H1 (cell line): ENCODE measurements at regions of chr4 and their contacts with region 1.

Region 1: DNA sequence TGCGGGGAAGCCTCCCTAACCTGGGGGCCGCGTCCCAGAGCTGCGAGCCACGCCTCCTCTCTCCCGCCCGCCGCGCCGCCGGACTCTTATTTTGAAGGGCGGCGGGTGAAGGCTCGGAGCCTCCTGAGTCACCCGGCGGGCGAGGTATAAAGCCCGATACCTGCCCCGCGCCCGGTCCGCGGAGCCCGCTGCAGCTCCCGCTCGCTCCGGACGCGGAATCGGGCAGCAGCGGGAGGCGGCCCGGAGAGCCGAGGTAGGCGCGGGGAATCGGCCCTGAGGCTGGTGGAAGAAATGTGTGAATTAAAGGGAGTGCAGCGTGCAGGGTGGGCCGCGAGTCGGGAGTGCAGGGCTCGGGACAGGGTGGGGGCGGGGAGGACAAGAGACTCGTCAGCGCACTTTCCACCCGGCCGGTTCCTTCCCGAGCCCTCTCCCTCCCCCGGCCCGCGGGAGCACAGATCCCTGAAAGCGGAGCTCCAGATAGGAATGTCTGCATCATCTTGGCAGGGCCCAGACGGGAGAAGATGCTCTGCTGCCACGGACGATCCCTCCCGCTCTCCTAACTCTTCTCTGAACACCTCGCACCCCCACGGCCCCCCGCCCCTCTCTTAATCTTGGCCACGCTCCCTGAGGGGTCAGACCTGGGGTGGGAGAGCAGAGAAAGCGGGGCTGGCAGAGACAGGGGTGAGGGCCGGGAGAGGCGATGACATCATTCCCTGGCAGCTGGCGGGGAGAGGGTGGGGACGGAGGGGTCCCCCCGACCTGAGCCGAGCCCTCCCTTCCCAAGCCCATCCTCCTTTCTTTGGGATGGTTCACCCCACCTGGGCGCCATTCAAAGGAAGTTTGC is 177.9 kb downstream of the CBR4 start:
- DNase-seq: peak; percentile 51 to 84
- H3K4me3 ChIP-seq: peak overlapping the region; percentile 69 to 96 (median 81)
- H3K27ac ChIP-seq: peak overlapping the region; percentile 88
- H3K4me1 ChIP-seq: peaks cover 0 to 20% (median under 1%) of the 10 kb centered on the region in 4 experiments; a peak in 5 of 7 replicates
- H3K27me3 ChIP-seq: peaks cover 0 to 11% (median 5%) of the 10 kb centered on the region in 4 experiments; a peak in 3 of 7 replicates
- CTCF ChIP-seq: no peak
- EP300 ChIP-seq: 0 out of 3 replicates have a peak, but pooled peaks of 1 of the 2 experiments have one; percentile 10
- POLR2A ChIP-seq: peak; percentile 75 to 80
- RAD21 ChIP-seq: 0 out of 4 replicates have a peak, but pooled peaks of 1 of the 2 experiments have one; percentile 3

Region 2: GRCh38 chr4:168710353-168710946 is 121.7 kb before region 1 on chr4:
- CTCF ChIA-PET with region 1: interaction called, 22 read pairs
- POLR2A ChIA-PET with region 1: interaction called, 3 read pairs
- DNase-seq: no peak
- H3K4me3 ChIP-seq: no peak overlapping the region
- H3K27ac ChIP-seq: no peak overlapping the region
- H3K4me1 ChIP-seq: no peaks in the 10 kb centered on the region
- H3K27me3 ChIP-seq: peaks cover 0 to 3% (median 0%) of the 10 kb centered on the region in 4 experiments; a peak in 2 of 7 replicates
- CTCF ChIP-seq: peak in 2 of 3 experiments; percentile 54 to 66; a peak in 3 of 4 replicates
- EP300 ChIP-seq: no peak
- POLR2A ChIP-seq: no peak
- RAD21 ChIP-seq: peak; percentile 83 to 87

Region 3: GRCh38 chr4:168815379-168816345 is 16.5 kb before region 1 on chr4:
- CTCF ChIA-PET with region 1: interaction called, 38 read pairs
- POLR2A ChIA-PET with region 1: interaction called, 127 read pairs
- DNase-seq: no peak
- H3K4me3 ChIP-seq: no peak overlapping the region
- H3K27ac ChIP-seq: no peak overlapping the region
- H3K4me1 ChIP-seq: peaks cover 0 to 17% (median 12%) of the 10 kb centered on the region in 4 experiments; a peak in 4 of 7 replicates
- H3K27me3 ChIP-seq: no peaks in the 10 kb centered on the region
- CTCF ChIP-seq: no peak
- EP300 ChIP-seq: no peak
- POLR2A ChIP-seq: no peak
- RAD21 ChIP-seq: no peak

Region 4: GRCh38 chr4:168847771-168848511 is 15.8 kb after region 1 on chr4:
- CTCF ChIA-PET with region 1: interaction called, 26 read pairs
- POLR2A ChIA-PET with region 1: interaction called, 32 read pairs
- DNase-seq: no peak
- H3K4me3 ChIP-seq: no peak overlapping the region
- H3K27ac ChIP-seq: no peak overlapping the region
- H3K4me1 ChIP-seq: peaks cover 14 to 41% (median 20%) of the 10 kb centered on the region in 4 experiments
- H3K27me3 ChIP-seq: no peaks in the 10 kb centered on the region
- CTCF ChIP-seq: no peak
- EP300 ChIP-seq: no peak
- POLR2A ChIP-seq: no peak
- RAD21 ChIP-seq: no peak

Region 5: DNA sequence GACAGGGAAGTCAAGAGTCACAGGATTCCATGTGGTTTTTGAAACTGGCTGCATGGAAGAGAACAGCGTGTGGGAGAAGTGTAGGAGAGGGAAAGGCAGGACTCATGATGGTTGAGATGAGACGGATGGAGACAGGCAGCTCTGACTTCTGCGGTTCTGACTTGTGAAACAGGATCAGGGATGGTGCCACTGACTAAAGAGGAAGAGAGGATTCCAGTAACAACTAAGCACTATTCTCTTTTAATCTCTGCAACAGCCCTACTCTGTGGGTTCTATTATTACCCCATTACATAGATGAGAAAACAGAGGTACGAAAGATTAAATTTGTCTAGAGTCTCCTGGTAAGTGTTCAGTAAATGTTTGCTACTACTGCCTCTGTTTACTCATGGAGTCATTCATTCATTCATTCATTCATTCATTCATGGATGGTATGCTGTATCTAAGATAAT is 21.7 kb after region 1 on chr4:
- CTCF ChIA-PET with region 1: interaction called, 25 read pairs
- POLR2A ChIA-PET with region 1: interaction called, 14 read pairs
- DNase-seq: no peak
- H3K4me3 ChIP-seq: no peak overlapping the region
- H3K27ac ChIP-seq: no peak overlapping the region
- H3K4me1 ChIP-seq: peaks cover 3 to 11% (median 3%) of the 10 kb centered on the region in 4 experiments; a peak in 6 of 7 replicates
- H3K27me3 ChIP-seq: no peaks in the 10 kb centered on the region
- CTCF ChIP-seq: no peak
- EP300 ChIP-seq: no peak
- POLR2A ChIP-seq: no peak
- RAD21 ChIP-seq: no peak

Region 6: DNA sequence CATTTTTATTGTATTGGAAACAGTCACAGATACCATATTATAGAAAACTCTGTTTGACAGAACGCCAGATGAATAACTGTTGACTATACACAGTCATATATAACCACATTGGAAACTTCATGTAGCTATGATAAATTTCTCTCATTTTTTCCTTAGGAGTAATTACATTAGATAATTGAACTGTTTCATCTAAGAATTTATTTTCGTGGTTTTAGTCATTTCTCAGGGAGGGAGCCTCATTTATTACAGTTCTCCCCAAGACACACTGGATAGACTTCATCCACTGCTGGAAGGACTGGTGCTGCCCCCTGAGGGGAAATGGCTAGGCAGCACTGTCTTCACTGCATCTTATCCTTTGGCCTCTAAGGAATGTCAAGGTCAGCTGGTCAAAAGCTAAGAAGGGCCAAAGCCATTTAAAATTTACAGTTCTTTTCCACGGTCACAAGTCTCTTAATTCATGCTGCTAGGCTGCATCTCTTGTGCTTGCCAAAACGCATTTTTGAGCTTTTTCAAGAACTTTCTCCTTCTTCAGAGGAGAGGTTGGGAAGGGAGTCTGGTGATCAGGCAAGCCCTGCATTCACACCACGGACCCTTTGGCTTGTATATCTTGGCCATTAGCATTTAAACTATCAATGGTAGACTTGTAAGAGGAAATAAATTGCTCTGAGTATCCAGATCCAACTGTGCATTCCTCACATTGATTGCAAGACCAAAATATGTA is 32.8 kb after region 1 on chr4:
- CTCF ChIA-PET with region 1: interaction called, 30 read pairs
- POLR2A ChIA-PET with region 1: interaction called, 3 read pairs
- DNase-seq: no peak
- H3K4me3 ChIP-seq: no peak overlapping the region
- H3K27ac ChIP-seq: no peak overlapping the region
- H3K4me1 ChIP-seq: peaks cover 0 to 8% (median 4%) of the 10 kb centered on the region in 4 experiments; a peak in 2 of 7 replicates
- H3K27me3 ChIP-seq: no peaks in the 10 kb centered on the region
- CTCF ChIP-seq: peak; percentile 48 to 64 (median 63)
- EP300 ChIP-seq: no peak
- POLR2A ChIP-seq: no peak
- RAD21 ChIP-seq: peak; percentile 67 to 72

Region 7: DNA sequence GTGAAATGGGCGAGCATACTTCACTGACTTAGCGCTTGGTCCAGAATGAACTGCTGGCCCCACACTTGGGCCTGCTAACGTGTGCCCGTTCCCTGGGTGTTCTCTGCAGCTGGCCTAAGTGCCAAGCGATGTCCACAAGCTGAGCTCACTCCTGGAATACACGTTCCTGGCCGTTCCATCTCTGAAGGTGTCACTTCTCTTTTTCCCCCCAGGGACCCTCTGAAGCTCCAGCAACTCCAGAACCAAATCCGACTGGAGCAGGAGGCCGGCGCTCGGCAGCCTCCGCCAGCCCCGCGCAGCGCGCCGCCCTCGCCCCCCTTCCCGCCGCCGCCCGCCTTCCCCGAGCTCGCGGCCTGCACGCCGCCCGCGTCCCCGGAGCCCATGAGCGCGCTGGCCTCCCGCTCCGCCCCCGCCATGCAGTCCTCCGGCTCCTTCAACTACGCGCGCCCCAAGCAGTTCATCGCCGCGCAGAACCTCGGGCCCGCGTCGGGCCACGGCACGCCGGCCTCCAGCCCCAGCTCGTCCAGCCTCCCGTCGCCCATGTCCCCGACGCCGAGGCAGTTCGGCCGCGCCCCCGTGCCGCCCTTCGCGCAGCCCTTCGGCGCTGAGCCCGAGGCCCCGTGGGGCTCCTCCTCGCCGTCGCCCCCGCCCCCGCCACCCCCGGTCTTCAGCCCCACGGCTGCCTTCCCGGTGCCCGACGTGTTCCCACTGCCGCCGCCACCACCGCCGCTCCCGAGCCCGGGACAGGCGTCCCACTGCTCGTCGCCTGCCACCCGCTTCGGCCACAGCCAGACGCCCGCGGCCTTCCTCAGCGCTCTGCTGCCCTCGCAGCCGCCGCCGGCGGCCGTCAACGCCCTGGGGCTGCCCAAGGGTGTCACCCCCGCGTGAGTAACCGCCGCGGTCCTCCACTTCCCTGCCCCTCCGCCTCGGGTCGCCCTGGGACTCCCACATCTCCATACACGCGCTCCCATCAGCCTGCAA is 45.7 kb after region 1 on chr4:
- CTCF ChIA-PET with region 1: interaction called, 12 read pairs
- POLR2A ChIA-PET with region 1: interaction called, 7 read pairs
- DNase-seq: peak in 1 of 2 experiments; percentile 75
- H3K4me3 ChIP-seq: peak overlapping the region; percentile 38 to 63 (median 41)
- H3K27ac ChIP-seq: no peak overlapping the region
- H3K4me1 ChIP-seq: peaks cover 0 to 3% (median 0%) of the 10 kb centered on the region in 4 experiments; a peak in 2 of 7 replicates
- H3K27me3 ChIP-seq: peaks cover 0 to 14% (median 3%) of the 10 kb centered on the region in 4 experiments; a peak in 6 of 7 replicates
- CTCF ChIP-seq: no peak
- EP300 ChIP-seq: no peak
- POLR2A ChIP-seq: 0 out of 3 replicates have a peak, but pooled peaks of 1 of the 2 experiments have one; percentile 15
- RAD21 ChIP-seq: peak in 1 of 2 experiments; percentile 1; a peak in 2 of 4 replicates

Region 8: DNA sequence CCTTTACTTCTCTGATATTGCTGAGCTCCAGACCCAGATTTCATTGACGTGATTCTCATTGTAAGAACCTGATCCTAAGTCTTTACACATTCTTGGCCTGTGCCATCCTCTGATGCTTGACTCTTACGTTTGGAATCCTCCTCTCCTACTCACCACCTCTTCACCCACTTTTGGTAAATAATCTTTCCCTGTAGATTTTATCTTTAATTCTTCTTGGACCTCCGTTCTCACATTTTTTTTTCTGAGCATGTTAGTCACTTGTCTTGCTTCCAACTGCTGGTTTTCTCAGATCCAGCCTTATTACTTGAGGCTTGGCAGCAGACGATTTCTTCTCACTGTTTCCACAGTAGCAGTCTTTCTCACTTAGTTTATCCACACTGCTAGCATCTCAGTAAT is 451.0 kb after region 1 on chr4:
- CTCF ChIA-PET with region 1: no interaction called
- POLR2A ChIA-PET with region 1: no interaction called
- DNase-seq: no peak
- H3K4me3 ChIP-seq: no peak overlapping the region
- H3K27ac ChIP-seq: no peak overlapping the region
- H3K4me1 ChIP-seq: no peaks in the 10 kb centered on the region
- H3K27me3 ChIP-seq: no peaks in the 10 kb centered on the region
- CTCF ChIP-seq: no peak
- EP300 ChIP-seq: no peak
- POLR2A ChIP-seq: no peak
- RAD21 ChIP-seq: no peak